ENCODE measurements at regions of chr1 and their contacts with region 1.

Region 1: GRCh38 chr1:155001675-155002463 is 733 bp upstream of the ZBTB7B start:
- DNase-seq: peak; percentile 99
- H3K4me3 ChIP-seq: peak overlapping the region; percentile 57 to 94 (median 61)
- H3K27ac ChIP-seq: peak overlapping the region; percentile 26
- H3K4me1 ChIP-seq: peaks cover 25% of the 10 kb centered on the region
- H3K27me3 ChIP-seq: no peaks in the 10 kb centered on the region
- CTCF ChIP-seq: peak; percentile 12 to 63
- POLR2A ChIP-seq: no peak

Region 2: DNA sequence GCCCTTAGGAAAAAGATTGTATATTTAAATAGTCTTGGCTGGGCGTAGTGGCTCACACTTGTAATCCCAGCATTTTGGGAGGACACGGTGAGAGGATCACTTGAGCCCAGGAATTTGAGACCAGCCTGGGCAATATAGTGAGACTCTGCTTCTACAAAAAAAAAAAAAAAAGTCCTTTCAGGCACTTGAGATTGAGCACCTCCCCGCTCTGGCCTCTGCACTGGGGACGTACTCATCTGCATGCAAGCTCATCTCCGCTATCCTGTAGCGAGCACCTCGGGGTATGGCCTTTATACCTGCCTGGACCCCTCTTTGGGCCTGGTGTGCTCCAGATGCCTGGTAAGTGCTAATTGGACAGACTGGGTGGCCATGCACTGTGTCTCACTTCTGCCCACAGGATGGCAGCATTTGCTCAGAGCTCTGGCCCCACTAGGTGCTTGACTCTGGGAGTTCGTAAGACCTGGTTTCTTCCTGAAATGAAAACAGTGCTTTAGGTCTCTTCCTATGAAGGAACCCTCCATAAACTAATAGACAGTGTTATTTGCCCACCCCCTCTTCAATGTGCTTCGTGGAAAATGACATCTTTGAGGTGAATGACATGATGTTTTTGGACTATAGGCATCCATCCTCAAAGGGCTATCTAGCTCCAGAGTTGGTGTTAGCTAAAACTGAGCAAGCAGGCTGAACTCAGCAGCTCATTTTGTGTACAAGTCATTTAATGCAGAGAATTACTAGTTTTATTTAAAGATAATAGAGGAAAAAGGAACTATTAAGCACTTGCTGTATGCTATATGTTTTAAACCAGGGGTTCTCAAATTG is 332.2 kb before region 1 on chr1:
- CTCF ChIA-PET with region 1: interaction called, 6 read pairs
- POLR2A ChIA-PET with region 1: no interaction called
- dilution Hi-C with region 1: no loop called
- intact Hi-C with region 1: loop called (anchors 5 kb)
- DNase-seq: peak; percentile 88
- H3K4me3 ChIP-seq: no peak overlapping the region
- H3K27ac ChIP-seq: no peak overlapping the region
- H3K4me1 ChIP-seq: no peaks in the 10 kb centered on the region
- H3K27me3 ChIP-seq: no peaks in the 10 kb centered on the region
- CTCF ChIP-seq: peak; percentile 76 to 82
- POLR2A ChIP-seq: no peak

Region 3: GRCh38 chr1:154955718-154956543 is 45.9 kb before region 1 on chr1 and contains the start of gene PBXIP1:
- CTCF ChIA-PET with region 1: interaction called, 48 read pairs
- POLR2A ChIA-PET with region 1: interaction called, 3 read pairs
- dilution Hi-C with region 1: no loop called
- intact Hi-C with region 1: loop called (anchors 1 kb)
- DNase-seq: peak; percentile 98
- H3K4me3 ChIP-seq: peak within 1 kb of the TSS; percentile 19 to 76 (median 57)
- H3K27ac ChIP-seq: peak within 1 kb of the TSS; percentile 69
- H3K4me1 ChIP-seq: peaks cover 26% of the 10 kb centered on the region
- H3K27me3 ChIP-seq: no peaks in the 10 kb centered on the region
- CTCF ChIP-seq: peak; percentile 12 to 33
- POLR2A ChIP-seq: no peak
- total RNA-seq, gene PBXIP1: 49.0 and 49.4 TPM in 2 replicates

Region 4: DNA sequence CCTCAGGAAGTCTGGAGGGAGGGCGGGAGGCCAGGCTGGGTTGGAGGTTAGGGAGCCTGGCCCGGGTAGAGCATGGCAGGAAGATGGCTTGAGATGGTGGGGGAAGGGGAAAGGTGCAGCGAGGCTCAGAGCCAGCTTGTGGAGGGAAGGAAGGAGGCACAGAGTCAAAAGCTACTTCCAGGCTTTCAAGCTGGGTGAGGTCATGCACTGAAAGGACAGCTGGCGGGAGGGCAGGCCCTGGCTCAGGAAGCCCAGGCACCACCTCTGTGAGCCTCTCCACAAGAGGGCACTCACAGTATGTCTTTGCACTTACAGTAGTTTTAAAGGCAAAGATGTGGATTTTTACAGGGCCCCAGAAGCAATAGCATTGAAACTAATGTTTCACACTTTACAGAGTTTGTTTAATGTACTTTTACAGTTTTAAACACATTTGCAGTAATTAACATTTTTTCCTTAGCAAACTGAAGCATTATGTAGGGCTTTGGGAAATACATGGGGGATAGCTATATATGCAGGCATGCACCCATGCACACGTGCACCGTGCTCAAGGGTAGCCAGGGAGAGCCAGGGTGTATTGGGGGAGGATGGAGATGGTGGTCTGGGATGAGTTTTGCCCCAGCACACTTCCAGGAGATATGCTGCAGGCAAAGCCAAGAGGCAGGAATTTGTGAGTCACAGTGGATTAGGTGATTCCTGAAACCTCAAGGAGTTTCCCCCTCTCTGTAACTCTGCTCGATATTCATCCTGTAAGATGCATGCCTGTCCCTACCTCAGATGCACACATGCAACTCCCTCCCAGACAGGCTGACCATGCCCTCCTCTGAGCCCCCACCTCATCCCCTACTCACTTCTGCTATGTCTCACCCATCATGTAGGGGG is 43.2 kb after region 1 on chr1:
- CTCF ChIA-PET with region 1: interaction called, 7 read pairs
- POLR2A ChIA-PET with region 1: no interaction called
- dilution Hi-C with region 1: no loop called
- intact Hi-C with region 1: loop called (anchors 2 kb)
- DNase-seq: peak; percentile 79
- H3K4me3 ChIP-seq: no peak overlapping the region
- H3K27ac ChIP-seq: no peak overlapping the region
- H3K4me1 ChIP-seq: peaks cover 18% of the 10 kb centered on the region
- H3K27me3 ChIP-seq: no peaks in the 10 kb centered on the region
- CTCF ChIP-seq: peak; percentile 79 to 89
- POLR2A ChIP-seq: no peak

Region 5: DNA sequence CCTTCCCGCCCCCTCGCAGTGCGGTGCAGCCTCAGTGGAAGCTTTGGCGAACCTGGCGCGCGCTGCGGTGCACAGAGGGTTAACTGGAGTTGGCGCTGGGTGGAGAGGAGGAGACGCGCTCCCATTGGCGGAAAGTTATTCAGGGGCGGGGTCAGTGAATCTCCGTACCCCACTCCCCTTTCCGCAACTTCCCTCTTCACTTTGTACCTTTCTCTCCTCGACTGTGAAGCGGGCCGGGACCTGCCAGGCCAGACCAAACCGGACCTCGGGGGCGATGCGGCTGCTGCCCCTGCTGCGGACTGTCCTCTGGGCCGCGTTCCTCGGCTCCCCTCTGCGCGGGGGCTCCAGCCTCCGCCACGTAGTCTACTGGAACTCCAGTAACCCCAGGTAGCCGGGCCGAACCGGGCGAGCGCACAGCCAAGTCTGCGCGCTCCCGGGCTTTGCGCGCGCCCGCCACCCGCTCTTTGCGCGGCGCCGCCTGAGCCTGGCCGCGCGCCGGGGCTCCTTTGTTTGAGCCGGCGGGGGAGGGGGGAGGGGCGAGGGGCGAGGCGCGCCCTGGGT is 61.8 kb after region 1 on chr1 and contains the start of gene EFNA4:
- CTCF ChIA-PET with region 1: interaction called, 5 read pairs
- POLR2A ChIA-PET with region 1: interaction called, 3 read pairs
- dilution Hi-C with region 1: no loop called
- intact Hi-C with region 1: loop called (anchors 1 kb)
- DNase-seq: peak; percentile 89
- H3K4me3 ChIP-seq: peak within 1 kb of the TSS; percentile 66 to 98 (median 85)
- H3K27ac ChIP-seq: peak within 1 kb of the TSS; percentile 36
- H3K4me1 ChIP-seq: peaks cover 10% of the 10 kb centered on the region
- H3K27me3 ChIP-seq: no peaks in the 10 kb centered on the region
- CTCF ChIP-seq: no peak
- POLR2A ChIP-seq: peak; percentile 89
- total RNA-seq, gene EFNA4: 16.5 and 17.5 TPM in 2 replicates

Measured in endothelial cell of umbilical vein (primary cell).